SK-N-SH (cell line): ENCODE measurements at regions of chr15 and their contacts with region 1.

Region 1: DNA sequence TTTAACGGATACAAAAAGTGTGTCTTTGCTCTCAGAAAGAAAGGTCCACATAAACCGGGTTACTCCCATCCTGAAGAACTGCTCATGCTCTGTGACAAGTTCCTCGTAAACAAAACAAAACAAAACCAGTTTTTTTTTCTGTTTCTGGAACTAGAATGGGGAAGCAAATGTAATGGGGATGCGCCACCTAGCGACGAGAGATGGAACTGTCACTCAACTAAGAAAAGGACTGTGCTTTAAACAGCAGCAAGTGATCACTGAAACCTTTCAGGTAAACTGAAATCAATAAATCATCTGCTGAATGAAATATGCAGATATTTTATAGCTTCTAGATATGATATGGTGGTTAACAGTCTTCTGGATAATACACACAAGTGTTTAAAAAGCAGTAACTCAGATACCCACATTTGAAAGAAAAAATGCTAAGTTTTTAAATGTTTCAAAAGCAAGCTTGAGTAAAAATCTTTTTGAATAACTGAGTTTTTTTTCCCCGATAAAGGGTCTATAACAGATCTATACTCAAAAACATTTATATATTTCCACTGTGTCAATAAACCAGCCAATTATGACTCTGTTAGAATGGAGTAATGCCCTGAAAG is 10.9 kb downstream of the TM2D3 start:
- DNase-seq: peak; percentile 58
- H3K4me3 ChIP-seq: peak overlapping the region in 1 of 2 experiments; percentile 31; a peak in 1 of 4 replicates
- H3K27ac ChIP-seq: peak overlapping the region; percentile 30 to 81; a peak in 3 of 4 replicates
- H3K4me1 ChIP-seq: peaks cover 14 to 16% of the 10 kb centered on the region in 2 experiments; a peak in 3 of 4 replicates
- H3K27me3 ChIP-seq: no peaks in the 10 kb centered on the region
- CTCF ChIP-seq: peak; percentile 95
- EP300 ChIP-seq: no peak
- RAD21 ChIP-seq: peak; percentile 88

Region 2: GRCh38 chr15:101277038-101277882 is 364.0 kb before region 1 on chr15 and contains the start of gene SELENOS:
- CTCF ChIA-PET with region 1: interaction called, 10 read pairs
- POLR2A ChIA-PET with region 1: no interaction called
- DNase-seq: peak; percentile 97
- H3K4me3 ChIP-seq: peak within 1 kb of the TSS; percentile 91 to 97
- H3K27ac ChIP-seq: peak within 1 kb of the TSS; percentile 75 to 86
- H3K4me1 ChIP-seq: peaks cover 3 to 32% of the 10 kb centered on the region in 2 experiments; a peak in 2 of 4 replicates
- H3K27me3 ChIP-seq: no peaks in the 10 kb centered on the region
- CTCF ChIP-seq: no peak
- EP300 ChIP-seq: peak in 1 of 2 experiments; percentile 43; a peak in 1 of 4 replicates
- RAD21 ChIP-seq: no peak
- polyA plus RNA-seq, gene SELENOS: 101 and 124 TPM in 2 replicates

Region 3: DNA sequence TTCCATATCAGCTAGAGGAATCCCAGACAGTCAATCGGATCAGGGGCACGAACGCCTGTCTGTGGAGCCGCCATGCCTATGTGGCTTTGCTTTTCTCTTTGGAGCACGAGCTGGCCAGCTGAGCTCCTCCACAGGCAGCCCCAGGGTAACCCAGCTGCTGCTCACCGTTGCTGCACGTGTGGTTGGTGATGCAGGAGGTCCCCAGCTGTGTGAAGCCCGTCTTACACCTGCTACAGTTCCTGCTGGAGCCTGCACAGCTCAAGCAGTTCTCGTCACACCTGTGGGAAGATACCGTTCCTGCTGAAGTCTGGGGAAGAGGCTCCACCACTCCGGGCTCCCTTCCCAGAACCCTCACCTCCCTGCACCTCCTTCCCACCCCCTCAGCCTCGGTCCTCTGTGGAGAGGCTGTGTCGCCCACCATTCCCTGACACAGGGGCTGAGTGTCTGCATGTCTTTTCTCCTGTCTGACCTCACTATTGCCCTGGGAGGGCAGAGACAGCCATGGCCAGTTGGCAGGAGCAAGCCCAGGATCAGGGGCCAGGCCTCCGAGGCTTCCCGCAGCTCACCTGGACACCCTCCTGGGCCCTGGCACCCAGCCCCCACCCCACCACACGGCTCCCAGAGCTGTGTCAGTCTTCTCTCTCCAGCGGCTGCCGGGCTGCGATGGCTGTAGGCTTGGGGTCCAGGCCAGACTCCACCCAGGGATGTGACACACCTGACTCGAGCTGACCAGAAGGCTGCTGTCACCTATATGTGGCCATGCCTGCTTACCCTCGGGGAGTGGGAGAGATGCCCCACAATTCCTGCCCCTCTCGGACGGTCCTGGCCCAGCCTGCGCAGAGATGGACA is 334.0 kb before region 1 on chr15:
- CTCF ChIA-PET with region 1: interaction called, 125 read pairs
- POLR2A ChIA-PET with region 1: interaction called, 4 read pairs
- DNase-seq: peak; percentile 16
- H3K4me3 ChIP-seq: no peak overlapping the region
- H3K27ac ChIP-seq: no peak overlapping the region
- H3K4me1 ChIP-seq: no peaks in the 10 kb centered on the region; a peak in 1 of 4 replicates
- H3K27me3 ChIP-seq: no peaks in the 10 kb centered on the region
- CTCF ChIP-seq: no peak
- EP300 ChIP-seq: no peak
- RAD21 ChIP-seq: no peak

Region 4: DNA sequence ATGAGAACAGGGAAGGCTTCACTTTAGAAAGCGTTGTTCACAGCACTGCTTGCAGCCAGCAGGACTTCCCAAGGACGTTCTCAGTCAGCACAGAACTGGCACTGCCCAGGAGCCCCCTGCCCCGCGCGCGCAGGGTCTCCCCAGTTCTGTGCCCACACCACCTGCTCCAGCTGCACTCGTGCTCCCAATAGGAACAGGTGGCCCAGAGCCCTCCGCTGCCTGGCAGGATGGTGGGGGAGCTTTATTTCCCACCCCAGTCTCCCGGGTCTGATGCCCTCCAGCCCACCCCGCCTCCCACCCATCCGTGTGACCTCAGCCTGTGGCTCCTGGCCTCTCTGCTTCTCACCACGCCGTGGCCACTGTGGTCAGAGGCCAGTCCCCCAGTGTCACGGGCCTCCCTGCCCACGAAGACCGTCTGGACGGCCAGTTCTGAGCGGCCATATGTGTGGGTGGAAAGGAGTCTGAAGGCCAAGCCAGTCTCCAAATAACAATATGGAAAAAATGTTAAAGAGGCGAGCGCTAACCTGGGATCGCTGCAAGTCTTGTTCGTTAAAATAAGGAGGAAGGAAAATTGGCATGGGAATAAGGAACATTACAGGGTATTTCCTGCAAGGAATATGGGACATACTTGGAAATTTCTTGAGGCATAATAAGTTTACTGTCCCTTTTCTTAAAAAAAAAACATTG is 97.2 kb before region 1 on chr15:
- CTCF ChIA-PET with region 1: no interaction called
- POLR2A ChIA-PET with region 1: no interaction called
- DNase-seq: no peak
- H3K4me3 ChIP-seq: no peak overlapping the region
- H3K27ac ChIP-seq: no peak overlapping the region
- H3K4me1 ChIP-seq: no peaks in the 10 kb centered on the region
- H3K27me3 ChIP-seq: no peaks in the 10 kb centered on the region
- CTCF ChIP-seq: no peak
- EP300 ChIP-seq: no peak
- RAD21 ChIP-seq: no peak

Region 5: GRCh38 chr15:101613130-101614000 is 27.9 kb before region 1 on chr15:
- CTCF ChIA-PET with region 1: interaction called, 30 read pairs
- POLR2A ChIA-PET with region 1: interaction called, 5 read pairs
- DNase-seq: peak; percentile 80
- H3K4me3 ChIP-seq: no peak overlapping the region
- H3K27ac ChIP-seq: peak overlapping the region in 1 of 2 experiments; percentile 75; a peak in 1 of 4 replicates
- H3K4me1 ChIP-seq: peaks cover 0 to 74% of the 10 kb centered on the region in 2 experiments; a peak in 2 of 4 replicates
- H3K27me3 ChIP-seq: no peaks in the 10 kb centered on the region
- CTCF ChIP-seq: no peak
- EP300 ChIP-seq: no peak
- RAD21 ChIP-seq: no peak

Region 6: DNA sequence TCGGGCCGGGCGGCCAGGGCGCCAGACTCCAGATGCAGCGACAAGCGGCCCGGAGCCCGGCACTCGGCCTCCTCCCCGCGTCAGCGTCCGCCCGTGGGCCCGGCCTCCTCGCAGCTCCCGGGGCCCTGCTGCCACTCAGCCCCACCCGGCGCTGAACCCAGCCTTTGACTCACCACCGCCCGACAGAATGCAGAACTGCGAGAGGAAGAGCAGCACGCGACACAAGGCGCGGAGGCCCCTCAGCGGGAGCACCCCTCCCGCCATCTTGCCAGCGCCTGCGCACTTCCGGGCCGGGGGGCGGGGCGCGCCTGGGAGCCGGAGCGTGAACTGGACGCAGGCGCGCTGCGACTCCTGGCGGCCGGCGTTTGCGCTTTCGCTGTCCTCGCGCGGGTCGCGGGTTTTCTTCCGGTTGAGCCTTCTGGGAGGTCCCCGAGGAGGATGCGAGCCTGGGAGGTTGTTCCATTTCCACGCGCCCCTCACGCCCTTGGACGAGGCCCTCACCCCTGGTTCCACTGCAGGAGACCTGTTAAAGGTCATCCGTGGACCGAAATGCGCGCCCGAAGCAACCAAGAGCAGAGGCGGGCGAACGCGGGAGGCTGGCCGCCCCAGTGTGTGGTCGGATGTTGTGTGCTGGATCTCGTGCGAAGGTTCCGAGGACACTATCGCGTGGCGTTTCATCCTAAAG is 11.0 kb after region 1 on chr15 and contains the start of gene TM2D3:
- CTCF ChIA-PET with region 1: interaction called, 11 read pairs
- POLR2A ChIA-PET with region 1: no interaction called
- DNase-seq: peak; percentile 98
- H3K4me3 ChIP-seq: peak within 1 kb of the TSS; percentile 88 to 92
- H3K27ac ChIP-seq: peak within 1 kb of the TSS; percentile 90 to 96
- H3K4me1 ChIP-seq: peaks cover 17 to 22% of the 10 kb centered on the region in 2 experiments; a peak in 3 of 4 replicates
- H3K27me3 ChIP-seq: no peaks in the 10 kb centered on the region
- CTCF ChIP-seq: peak; percentile 61
- EP300 ChIP-seq: no peak; a peak in 1 of 4 replicates
- RAD21 ChIP-seq: peak; percentile 32; the same call in 1 of the 2 replicates
- polyA plus RNA-seq, gene TM2D3: 71.6 and 73.3 TPM in 2 replicates